ENCODE measurements at regions of chr1 and their contacts with region 1.

Region 1: GRCh38 chr1:218942431-218942830 is 231.2 kb upstream of the LYPLAL1 start:
- DNase-seq: no peak
- H3K4me3 ChIP-seq: no peak overlapping the region
- H3K27ac ChIP-seq: no peak overlapping the region
- H3K4me1 ChIP-seq: peaks cover 7% of the 10 kb centered on the region
- H3K27me3 ChIP-seq: no peaks in the 10 kb centered on the region
- CTCF ChIP-seq: no peak

Region 2: DNA sequence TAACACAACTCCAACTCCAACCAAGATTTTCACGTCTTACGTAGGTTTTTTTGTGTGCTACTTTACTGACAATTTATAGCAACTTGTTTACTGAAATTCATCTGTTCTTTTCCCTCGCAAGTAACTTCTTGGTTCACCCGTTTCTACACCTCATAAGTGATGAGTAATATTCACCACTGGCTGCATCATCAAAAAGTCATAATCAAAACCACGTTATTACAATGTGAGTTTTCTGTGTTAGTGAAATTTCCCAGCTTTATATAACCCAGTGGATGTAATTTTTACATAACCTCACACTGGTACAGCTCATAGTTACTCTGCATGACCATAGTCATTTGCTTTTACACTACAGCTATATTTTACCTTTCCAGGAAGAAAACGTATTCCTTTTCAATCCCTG is 169.9 kb before region 1 on chr1:
- CTCF ChIA-PET with region 1: no interaction called
- dilution Hi-C with region 1: no loop called
- in situ Hi-C with region 1: no loop called
- intact Hi-C with region 1: no loop called
- DNase-seq: peak; percentile 88
- H3K4me3 ChIP-seq: no peak overlapping the region
- H3K27ac ChIP-seq: peak overlapping the region; percentile 9
- H3K4me1 ChIP-seq: no peaks in the 10 kb centered on the region
- H3K27me3 ChIP-seq: no peaks in the 10 kb centered on the region
- CTCF ChIP-seq: no peak

Region 3: DNA sequence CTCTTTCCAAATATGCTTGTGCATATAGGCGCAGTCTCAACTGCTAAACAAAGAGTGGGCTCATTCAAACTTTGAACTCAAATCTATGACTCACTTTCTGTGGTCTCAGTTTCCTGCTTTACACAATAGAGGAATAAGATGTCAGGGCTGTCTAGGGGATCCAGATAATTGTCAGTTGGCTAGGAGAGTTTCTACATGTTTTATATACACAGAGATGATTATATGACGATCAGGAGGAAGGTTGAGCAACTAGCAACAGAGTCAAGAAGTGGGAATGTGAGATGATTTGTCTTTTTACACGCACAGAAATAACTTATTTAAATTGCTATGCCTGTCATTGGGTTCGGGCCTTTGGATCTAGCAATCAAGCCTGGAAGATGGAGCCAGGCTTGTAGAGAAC is 68.1 kb before region 1 on chr1:
- CTCF ChIA-PET with region 1: no interaction called
- dilution Hi-C with region 1: loop called (anchors 5 kb)
- in situ Hi-C with region 1: no loop called
- intact Hi-C with region 1: no loop called
- DNase-seq: peak; percentile 97
- H3K4me3 ChIP-seq: no peak overlapping the region
- H3K27ac ChIP-seq: peak overlapping the region; percentile 88
- H3K4me1 ChIP-seq: peaks cover 21% of the 10 kb centered on the region
- H3K27me3 ChIP-seq: no peaks in the 10 kb centered on the region
- CTCF ChIP-seq: no peak